ENCODE measurements at regions of chr12 and their contacts with region 1.

Region 1: GRCh38 chr12:7638760-7639555 is 26.8 kb downstream of the APOBEC1 start:
- DNase-seq: peak; percentile 79 to 82
- ATAC-seq: peak; percentile 96
- H3K4me3 ChIP-seq: no peak overlapping the region
- H3K27ac ChIP-seq: no peak overlapping the region
- H3K4me1 ChIP-seq: no peaks in the 10 kb centered on the region
- H3K27me3 ChIP-seq: no peaks in the 10 kb centered on the region

Region 2: GRCh38 chr12:6863586-6864321 is 775.2 kb before region 1 on chr12:
- intact Hi-C with region 1: no loop called
- DNase-seq: no peak
- ATAC-seq: no peak
- H3K4me3 ChIP-seq: no peak overlapping the region
- H3K27ac ChIP-seq: no peak overlapping the region
- H3K4me1 ChIP-seq: peaks cover 0 to 1% of the 10 kb centered on the region in 2 donors
- H3K27me3 ChIP-seq: no peaks in the 10 kb centered on the region

Region 3: GRCh38 chr12:7142056-7142644 is 496.8 kb before region 1 on chr12:
- intact Hi-C with region 1: loop called in 1 of 2 experiments (anchors 10 kb)
- DNase-seq: peak in 1 of 2 donors; percentile 61
- ATAC-seq: peak; percentile 60
- H3K4me3 ChIP-seq: no peak overlapping the region
- H3K27ac ChIP-seq: no peak overlapping the region
- H3K4me1 ChIP-seq: no peaks in the 10 kb centered on the region
- H3K27me3 ChIP-seq: no peaks in the 10 kb centered on the region

Region 4: GRCh38 chr12:7219599-7220243 is 419.2 kb before region 1 on chr12:
- intact Hi-C with region 1: loop called (anchors 1 to 2 kb)
- DNase-seq: peak; percentile 79 to 80
- ATAC-seq: peak; percentile 73
- H3K4me3 ChIP-seq: no peak overlapping the region
- H3K27ac ChIP-seq: no peak overlapping the region
- H3K4me1 ChIP-seq: no peaks in the 10 kb centered on the region
- H3K27me3 ChIP-seq: no peaks in the 10 kb centered on the region